Natural killer cell (primary cell): ENCODE measurements at regions of chr19 and their contacts with region 1.

Region 1: GRCh38 chr19:38792250-38793111 is 3.5 kb downstream of the LGALS7B start:
- DNase-seq: peak; percentile 48 to 59
- ATAC-seq: peak; percentile 49 to 60 (median 50)
- H3K4me3 ChIP-seq: peak overlapping the region; percentile 37
- H3K4me3 Mint-ChIP-seq: peak overlapping the region; percentile 69
- H3K27ac ChIP-seq: no peak overlapping the region
- H3K27ac Mint-ChIP-seq: peak overlapping the region in 1 of 2 donors; percentile 22
- H3K4me1 ChIP-seq: peaks cover 13% of the 10 kb centered on the region
- H3K4me1 Mint-ChIP-seq: no peaks in the 10 kb centered on the region
- H3K27me3 ChIP-seq: no peaks in the 10 kb centered on the region
- H3K27me3 Mint-ChIP-seq: no peaks in the 10 kb centered on the region
- CTCF ChIP-seq: peak; percentile 55

Region 2: DNA sequence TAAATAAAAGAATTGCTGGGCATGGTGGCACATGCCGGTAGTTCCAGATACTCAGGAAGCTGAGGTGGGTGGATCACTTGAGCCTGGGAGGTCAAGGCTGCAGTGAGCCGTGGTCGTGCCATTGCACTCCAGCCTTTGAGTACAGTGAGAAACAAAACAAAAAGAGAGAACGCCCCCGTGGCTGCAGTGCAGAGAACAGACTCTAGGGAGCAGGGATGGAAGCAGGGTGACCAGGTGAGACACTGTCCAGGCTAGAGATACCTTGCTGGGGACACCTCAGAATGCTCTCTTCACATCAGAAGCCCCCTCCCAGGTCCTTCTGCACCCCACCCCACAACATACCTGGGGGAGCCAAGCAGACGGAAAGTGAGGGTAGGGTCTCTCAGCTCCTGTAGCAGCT is 199.5 kb before region 1 on chr19:
- intact Hi-C with region 1: no loop called
- DNase-seq: no peak
- ATAC-seq: no peak
- H3K4me3 ChIP-seq: no peak overlapping the region
- H3K4me3 Mint-ChIP-seq: no peak overlapping the region
- H3K27ac ChIP-seq: no peak overlapping the region
- H3K27ac Mint-ChIP-seq: no peak overlapping the region
- H3K4me1 ChIP-seq: no peaks in the 10 kb centered on the region
- H3K4me1 Mint-ChIP-seq: peaks cover 0 to 1% of the 10 kb centered on the region in 2 donors
- H3K27me3 ChIP-seq: no peaks in the 10 kb centered on the region
- H3K27me3 Mint-ChIP-seq: no peaks in the 10 kb centered on the region
- CTCF ChIP-seq: no peak

Region 3: DNA sequence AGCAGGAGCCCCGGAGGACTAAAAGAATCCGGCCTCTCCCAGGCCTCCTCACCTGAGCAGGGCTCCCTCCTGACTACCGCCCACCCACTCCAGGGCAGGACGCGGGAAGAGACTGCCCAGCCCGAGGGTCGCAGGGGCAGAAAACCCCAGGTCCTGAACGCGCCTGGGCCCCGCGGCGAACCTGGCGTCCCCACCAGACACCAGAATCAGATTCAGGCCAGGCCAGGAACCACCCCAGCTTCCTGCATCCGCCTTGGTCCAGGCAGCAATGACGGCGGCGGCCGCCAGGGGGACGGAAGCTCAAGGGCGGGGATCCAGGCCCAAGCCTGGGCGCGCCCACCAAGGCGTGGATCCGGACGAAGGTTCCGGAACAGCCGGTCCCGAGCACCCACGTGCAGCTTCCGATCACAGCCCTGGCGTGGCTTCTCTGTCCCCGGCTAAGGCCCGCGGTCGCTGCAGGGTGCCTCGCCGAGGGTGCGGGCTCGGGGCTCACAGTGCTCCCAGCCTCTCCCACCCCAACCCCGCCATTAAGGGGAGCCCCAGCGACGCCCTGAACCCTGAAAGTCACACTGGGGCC is 22.8 kb before region 1 on chr19:
- intact Hi-C with region 1: loop called (anchors 2 kb)
- DNase-seq: peak; percentile 88 to 93
- ATAC-seq: peak; percentile 90 to 96 (median 91)
- H3K4me3 ChIP-seq: peak overlapping the region; percentile 35
- H3K4me3 Mint-ChIP-seq: peak overlapping the region; percentile 73
- H3K27ac ChIP-seq: peak overlapping the region; percentile 67
- H3K27ac Mint-ChIP-seq: peak overlapping the region; percentile 85 to 88
- H3K4me1 ChIP-seq: peaks cover 12% of the 10 kb centered on the region
- H3K4me1 Mint-ChIP-seq: peaks cover 7% of the 10 kb centered on the region in 2 donors
- H3K27me3 ChIP-seq: no peaks in the 10 kb centered on the region
- H3K27me3 Mint-ChIP-seq: no peaks in the 10 kb centered on the region
- CTCF ChIP-seq: peak; percentile 76

Region 4: DNA sequence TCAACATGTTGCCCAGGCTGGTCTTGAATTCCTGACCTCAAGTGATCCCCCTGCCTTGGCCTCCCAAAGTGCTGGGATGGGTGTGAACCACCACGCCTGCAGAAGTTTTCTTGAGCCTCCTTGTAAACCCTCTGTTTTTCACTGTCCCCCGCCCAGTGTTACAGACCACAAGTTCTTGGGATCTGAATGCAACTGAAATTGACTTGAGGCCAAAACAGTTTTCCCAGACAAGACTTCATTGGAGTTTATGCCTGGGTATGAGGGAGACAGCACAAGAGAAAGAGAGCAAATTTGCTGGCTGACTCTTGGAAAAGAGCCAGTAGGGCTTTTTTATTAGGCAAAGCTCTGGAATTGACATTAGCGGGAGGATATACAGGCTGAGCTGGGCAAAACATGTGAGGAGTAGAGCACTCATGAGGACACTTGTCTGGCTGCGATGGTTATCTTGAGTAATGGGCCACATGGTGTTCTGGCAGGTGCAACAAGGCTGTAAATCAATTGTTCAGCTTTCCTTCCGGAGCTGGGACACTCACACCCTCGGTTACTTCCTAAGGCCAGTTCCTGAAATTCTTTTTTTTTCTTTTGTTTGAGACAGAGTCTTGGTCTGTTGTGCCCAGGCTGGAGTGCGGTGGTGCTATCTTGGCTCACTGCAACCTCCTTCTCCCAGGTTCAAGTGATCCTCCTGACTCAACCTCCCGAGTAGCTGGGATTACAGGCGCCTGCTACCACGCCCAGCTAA is 70.0 kb after region 1 on chr19:
- intact Hi-C with region 1: no loop called
- DNase-seq: no peak
- ATAC-seq: no peak
- H3K4me3 ChIP-seq: no peak overlapping the region
- H3K4me3 Mint-ChIP-seq: no peak overlapping the region
- H3K27ac ChIP-seq: no peak overlapping the region
- H3K27ac Mint-ChIP-seq: peak overlapping the region; percentile 29 to 53
- H3K4me1 ChIP-seq: peaks cover 54% of the 10 kb centered on the region
- H3K4me1 Mint-ChIP-seq: peaks cover 35 to 38% of the 10 kb centered on the region in 2 donors
- H3K27me3 ChIP-seq: no peaks in the 10 kb centered on the region
- H3K27me3 Mint-ChIP-seq: no peaks in the 10 kb centered on the region
- CTCF ChIP-seq: no peak

Region 5: GRCh38 chr19:38891771-38892170 is 99.3 kb after region 1 on chr19:
- intact Hi-C with region 1: no loop called
- DNase-seq: no peak
- ATAC-seq: no peak
- H3K4me3 ChIP-seq: no peak overlapping the region
- H3K4me3 Mint-ChIP-seq: no peak overlapping the region
- H3K27ac ChIP-seq: no peak overlapping the region
- H3K27ac Mint-ChIP-seq: no peak overlapping the region
- H3K4me1 ChIP-seq: peaks cover 12% of the 10 kb centered on the region
- H3K4me1 Mint-ChIP-seq: peaks cover 18 to 21% of the 10 kb centered on the region in 2 donors
- H3K27me3 ChIP-seq: no peaks in the 10 kb centered on the region
- H3K27me3 Mint-ChIP-seq: no peaks in the 10 kb centered on the region
- CTCF ChIP-seq: no peak